Activated T-helper 1 cell treated with anti-CD3 and anti-CD28 coated beads, Interleukin-12 subunit alpha, Interleukin-12 subunit beta, Interleukin-2, Interleukin-4 antibody, amounts not matched to agents 30 ng/mL and 10 ng/mL and 1 ng/mL, durations not matched to agents 14 hours and 24 hours and 36 hours (primary cell): ENCODE measurements at regions of chr15 and their contacts with region 1.

Region 1: GRCh38 chr15:70488002-70488605 is 275.3 kb downstream of the UACA start:
- DNase-seq: peak; percentile 61
- H3K4me3 Mint-ChIP-seq: no peak overlapping the region
- H3K27ac Mint-ChIP-seq: peak overlapping the region; percentile 77
- H3K4me1 Mint-ChIP-seq: peaks cover 97% of the 10 kb centered on the region
- H3K27me3 Mint-ChIP-seq: peaks cover 38% of the 10 kb centered on the region

Region 2: GRCh38 chr15:69576035-69576526 is 912.0 kb before region 1 on chr15:
- intact Hi-C with region 1: loop called (anchors 1 kb)
- DNase-seq: peak; percentile 26
- H3K4me3 Mint-ChIP-seq: no peak overlapping the region
- H3K27ac Mint-ChIP-seq: no peak overlapping the region
- H3K4me1 Mint-ChIP-seq: peaks cover 35% of the 10 kb centered on the region
- H3K27me3 Mint-ChIP-seq: peaks cover 5% of the 10 kb centered on the region

Region 3: GRCh38 chr15:69760890-69761568 is 727.1 kb before region 1 on chr15:
- intact Hi-C with region 1: loop called (anchors 1 kb)
- DNase-seq: peak; percentile 79
- H3K4me3 Mint-ChIP-seq: peak overlapping the region; percentile 72
- H3K27ac Mint-ChIP-seq: peak overlapping the region; percentile 92
- H3K4me1 Mint-ChIP-seq: peaks cover 81% of the 10 kb centered on the region
- H3K27me3 Mint-ChIP-seq: peaks cover 2% of the 10 kb centered on the region

Region 4: DNA sequence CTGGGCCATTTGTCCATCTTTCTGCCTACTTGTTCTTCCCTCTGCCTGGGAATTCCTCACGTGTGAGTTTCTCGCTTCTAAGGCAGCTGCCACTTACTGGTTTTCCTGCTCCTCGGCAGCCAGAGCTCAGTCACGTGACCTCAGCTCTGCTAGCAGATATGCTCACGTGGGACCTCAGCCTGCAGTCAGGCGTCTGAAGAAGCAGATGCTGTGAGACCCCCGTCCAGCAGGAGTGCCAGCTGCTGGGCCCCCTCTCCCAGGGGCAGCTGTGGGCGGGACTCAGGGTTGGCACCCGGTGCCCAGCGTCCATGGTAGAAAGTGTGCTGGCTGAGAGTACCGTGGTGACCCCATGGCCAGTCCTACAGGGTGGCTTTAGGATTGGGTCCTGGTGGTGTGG is 229.1 kb before region 1 on chr15:
- intact Hi-C with region 1: loop called (anchors 2 kb)
- DNase-seq: peak; percentile 15
- H3K4me3 Mint-ChIP-seq: peak overlapping the region; percentile 45
- H3K27ac Mint-ChIP-seq: no peak overlapping the region
- H3K4me1 Mint-ChIP-seq: peaks cover 37% of the 10 kb centered on the region
- H3K27me3 Mint-ChIP-seq: peaks cover 50% of the 10 kb centered on the region

Region 5: GRCh38 chr15:70474471-70475396 is 13.4 kb before region 1 on chr15:
- intact Hi-C with region 1: no loop called
- DNase-seq: no peak
- H3K4me3 Mint-ChIP-seq: peak overlapping the region; percentile 58
- H3K27ac Mint-ChIP-seq: peak overlapping the region; percentile 40
- H3K4me1 Mint-ChIP-seq: peaks cover 56% of the 10 kb centered on the region
- H3K27me3 Mint-ChIP-seq: peaks cover 65% of the 10 kb centered on the region

Region 6: DNA sequence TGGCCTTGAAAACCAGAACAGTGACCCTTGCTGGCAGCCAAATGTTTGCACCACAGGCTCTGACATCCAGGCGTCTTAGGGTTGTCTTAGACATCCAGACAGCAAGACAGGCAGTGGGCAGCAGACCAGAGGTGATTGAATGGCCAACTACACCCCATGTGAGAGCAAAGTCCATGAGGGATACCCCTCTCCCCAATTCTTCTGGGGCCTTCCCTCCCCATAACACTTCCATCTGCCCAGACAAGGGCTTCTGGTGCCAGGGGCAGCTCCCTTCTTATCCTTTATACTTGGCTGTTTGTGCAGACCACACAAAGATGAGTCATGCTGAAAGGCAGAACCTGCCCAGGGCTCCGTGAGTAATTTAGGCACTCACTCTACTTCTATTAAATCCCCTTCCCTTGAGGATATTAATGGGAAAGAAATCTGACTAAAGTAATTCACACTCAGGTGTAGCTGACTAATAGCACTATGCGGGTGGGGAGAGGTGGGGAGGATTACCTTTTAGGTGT is 17.4 kb after region 1 on chr15:
- intact Hi-C with region 1: loop called (anchors 1 kb)
- DNase-seq: no peak
- H3K4me3 Mint-ChIP-seq: peak overlapping the region; percentile 42
- H3K27ac Mint-ChIP-seq: peak overlapping the region; percentile 72
- H3K4me1 Mint-ChIP-seq: peaks cover 86% of the 10 kb centered on the region
- H3K27me3 Mint-ChIP-seq: peaks cover 7% of the 10 kb centered on the region

Region 7: DNA sequence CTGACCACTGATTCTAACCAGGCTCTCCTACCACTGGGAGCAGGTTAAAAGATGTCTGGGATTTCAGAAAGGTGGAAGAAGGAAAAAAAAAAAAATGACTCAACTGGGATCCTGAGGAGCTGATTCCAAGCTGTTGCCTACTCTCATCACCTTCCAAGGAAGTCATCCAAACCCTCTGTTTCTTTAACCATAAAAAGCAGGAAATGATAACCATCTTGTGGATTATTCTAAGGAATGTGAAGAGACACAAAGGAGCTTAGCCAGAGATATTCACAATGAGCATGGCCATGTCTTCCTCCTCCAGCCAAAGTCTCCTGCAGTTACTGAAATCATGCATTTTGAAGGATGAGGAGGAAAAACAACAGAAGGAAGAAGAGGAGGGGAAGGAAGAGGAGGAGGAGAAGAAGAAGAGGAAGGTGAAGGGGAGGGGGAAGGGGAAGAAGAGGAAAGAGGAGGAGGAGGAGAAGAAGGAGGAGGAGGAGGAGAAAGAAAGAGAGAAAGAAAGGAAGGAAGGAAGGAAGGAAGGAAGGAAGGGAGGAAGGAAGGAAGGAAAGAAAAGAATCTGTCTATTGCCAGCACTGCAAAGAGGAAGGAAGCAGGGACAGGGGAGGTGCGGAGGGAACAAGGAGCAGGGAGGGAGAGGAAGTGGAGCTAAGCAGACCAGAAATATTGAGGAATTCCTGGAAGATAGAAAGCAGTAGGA is 46.0 kb after region 1 on chr15:
- intact Hi-C with region 1: no loop called
- DNase-seq: no peak
- H3K4me3 Mint-ChIP-seq: peak overlapping the region; percentile 46
- H3K27ac Mint-ChIP-seq: no peak overlapping the region
- H3K4me1 Mint-ChIP-seq: peaks cover 46% of the 10 kb centered on the region
- H3K27me3 Mint-ChIP-seq: peaks cover 16% of the 10 kb centered on the region

Region 8: GRCh38 chr15:70545526-70545925 is 57.4 kb after region 1 on chr15:
- intact Hi-C with region 1: loop called (anchors 5 kb)
- DNase-seq: no peak
- H3K4me3 Mint-ChIP-seq: no peak overlapping the region
- H3K27ac Mint-ChIP-seq: no peak overlapping the region
- H3K4me1 Mint-ChIP-seq: peaks cover 5% of the 10 kb centered on the region
- H3K27me3 Mint-ChIP-seq: peaks cover 9% of the 10 kb centered on the region